ENCODE measurements at regions of chr2 and their contacts with region 1.

Region 1: DNA sequence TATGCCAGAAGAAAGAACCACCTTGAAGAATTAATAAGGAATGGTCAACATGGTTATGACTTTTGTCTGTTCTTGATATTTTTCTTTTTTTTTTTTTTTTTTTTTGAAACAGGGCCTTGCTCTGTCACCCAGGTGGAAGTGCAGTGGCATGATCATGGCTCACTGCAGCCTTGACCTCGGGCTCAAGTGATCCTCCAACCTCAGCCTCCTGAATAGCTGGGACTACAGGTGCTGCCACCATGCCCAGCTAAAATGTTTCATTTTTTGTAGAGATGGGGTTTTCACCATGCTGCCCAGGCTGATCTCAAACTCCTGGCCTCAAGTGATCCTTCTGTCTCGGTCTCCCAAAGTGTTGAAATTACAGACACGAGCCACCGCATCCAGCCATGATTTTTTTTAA is 53.4 kb upstream of the ACSL3 start:
- DNase-seq: no peak
- H3K4me3 ChIP-seq: no peak overlapping the region
- H3K4me3 Mint-ChIP-seq: no peak overlapping the region
- H3K27ac ChIP-seq: no peak overlapping the region
- H3K27ac Mint-ChIP-seq: no peak overlapping the region
- H3K4me1 ChIP-seq: no peaks in the 10 kb centered on the region
- H3K4me1 Mint-ChIP-seq: no peaks in the 10 kb centered on the region
- H3K27me3 ChIP-seq: peaks cover 5% of the 10 kb centered on the region
- H3K27me3 Mint-ChIP-seq: peaks cover 5 to 22% of the 10 kb centered on the region in 2 donors

Region 2: GRCh38 chr2:222797261-222797660 is 10.2 kb before region 1 on chr2:
- CTCF ChIA-PET with region 1: interaction called, 10 read pairs
- POLR2A ChIA-PET with region 1: no interaction called
- DNase-seq: no peak
- H3K4me3 ChIP-seq: no peak overlapping the region
- H3K4me3 Mint-ChIP-seq: no peak overlapping the region
- H3K27ac ChIP-seq: no peak overlapping the region
- H3K27ac Mint-ChIP-seq: no peak overlapping the region
- H3K4me1 ChIP-seq: no peaks in the 10 kb centered on the region
- H3K4me1 Mint-ChIP-seq: no peaks in the 10 kb centered on the region
- H3K27me3 ChIP-seq: no peaks in the 10 kb centered on the region
- H3K27me3 Mint-ChIP-seq: peaks cover 3 to 7% of the 10 kb centered on the region in 2 donors

Region 3: DNA sequence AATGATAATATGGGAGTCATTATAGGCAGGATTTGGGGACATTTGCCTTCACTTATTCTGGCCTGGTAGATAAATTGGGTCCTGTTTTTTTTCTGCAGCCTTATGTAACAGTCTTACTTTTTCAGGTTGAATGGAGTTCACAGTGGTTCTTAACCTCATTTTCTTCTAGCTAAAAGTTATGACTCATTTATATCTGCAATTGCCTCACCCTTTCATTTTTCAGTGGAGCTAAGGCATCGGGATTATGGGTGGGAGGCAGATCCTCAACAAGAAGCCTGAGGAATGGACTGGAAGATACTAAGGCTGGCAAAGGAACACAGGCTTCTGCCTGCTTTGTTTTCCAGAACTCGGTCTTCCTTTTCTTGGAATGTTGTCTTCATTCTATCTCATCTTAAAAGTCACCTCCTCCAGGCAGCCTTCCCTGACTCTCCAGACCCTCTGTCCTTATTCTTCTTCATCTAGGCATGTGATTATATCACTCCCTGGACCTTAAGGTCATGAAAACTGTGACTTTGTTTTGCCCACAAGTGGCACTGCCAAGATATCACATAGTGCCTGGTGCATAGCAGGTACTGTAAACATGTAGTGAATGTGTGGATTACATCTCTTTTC is 12.4 kb after region 1 on chr2:
- CTCF ChIA-PET with region 1: no interaction called
- POLR2A ChIA-PET with region 1: no interaction called
- DNase-seq: no peak
- H3K4me3 ChIP-seq: no peak overlapping the region
- H3K4me3 Mint-ChIP-seq: no peak overlapping the region
- H3K27ac ChIP-seq: no peak overlapping the region
- H3K27ac Mint-ChIP-seq: no peak overlapping the region
- H3K4me1 ChIP-seq: no peaks in the 10 kb centered on the region
- H3K4me1 Mint-ChIP-seq: no peaks in the 10 kb centered on the region
- H3K27me3 ChIP-seq: no peaks in the 10 kb centered on the region
- H3K27me3 Mint-ChIP-seq: peaks cover 1 to 11% of the 10 kb centered on the region in 2 donors

Region 4: GRCh38 chr2:222866358-222866960 is 59.0 kb after region 1 on chr2:
- CTCF ChIA-PET with region 1: no interaction called
- POLR2A ChIA-PET with region 1: no interaction called
- DNase-seq: no peak
- H3K4me3 ChIP-seq: no peak overlapping the region
- H3K4me3 Mint-ChIP-seq: no peak overlapping the region
- H3K27ac ChIP-seq: no peak overlapping the region
- H3K27ac Mint-ChIP-seq: no peak overlapping the region
- H3K4me1 ChIP-seq: peaks cover 43% of the 10 kb centered on the region
- H3K4me1 Mint-ChIP-seq: peaks cover 8 to 20% (median 15%) of the 10 kb centered on the region in 3 donors
- H3K27me3 ChIP-seq: no peaks in the 10 kb centered on the region
- H3K27me3 Mint-ChIP-seq: no peaks in the 10 kb centered on the region

Measured in CD8-positive, alpha-beta memory T cell (primary cell).